ENCODE measurements at regions of chr2 and their contacts with region 1.

Region 1: GRCh38 chr2:201795607-201796477 is 10.5 kb upstream of the CDK15 start:
- DNase-seq: no peak
- ATAC-seq: peak; percentile 66

Region 2: GRCh38 chr2:201847481-201847880 is 51.6 kb after region 1 on chr2:
- intact Hi-C with region 1: no loop called
- DNase-seq: no peak
- ATAC-seq: no peak

Region 3: DNA sequence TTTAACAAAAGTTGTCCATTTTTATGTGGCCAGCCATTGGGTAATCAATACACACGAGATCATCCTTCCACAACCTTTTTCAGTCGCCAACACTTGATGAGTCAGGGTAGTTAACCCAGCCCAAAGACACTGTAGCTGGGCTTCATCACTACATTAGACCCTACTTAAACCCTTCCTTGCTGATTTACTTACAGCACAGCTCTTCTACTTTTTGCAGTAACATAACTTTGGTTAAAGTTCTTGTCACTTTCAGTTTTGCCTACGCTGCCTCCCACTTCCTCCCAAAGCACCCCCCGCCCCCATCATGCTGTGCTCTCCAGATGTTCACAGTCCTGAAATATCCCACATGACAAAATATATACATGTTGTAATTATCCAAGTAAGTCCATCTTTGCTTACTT is 114.1 kb after region 1 on chr2:
- intact Hi-C with region 1: no loop called
- DNase-seq: no peak
- ATAC-seq: peak; percentile 28

Region 4: DNA sequence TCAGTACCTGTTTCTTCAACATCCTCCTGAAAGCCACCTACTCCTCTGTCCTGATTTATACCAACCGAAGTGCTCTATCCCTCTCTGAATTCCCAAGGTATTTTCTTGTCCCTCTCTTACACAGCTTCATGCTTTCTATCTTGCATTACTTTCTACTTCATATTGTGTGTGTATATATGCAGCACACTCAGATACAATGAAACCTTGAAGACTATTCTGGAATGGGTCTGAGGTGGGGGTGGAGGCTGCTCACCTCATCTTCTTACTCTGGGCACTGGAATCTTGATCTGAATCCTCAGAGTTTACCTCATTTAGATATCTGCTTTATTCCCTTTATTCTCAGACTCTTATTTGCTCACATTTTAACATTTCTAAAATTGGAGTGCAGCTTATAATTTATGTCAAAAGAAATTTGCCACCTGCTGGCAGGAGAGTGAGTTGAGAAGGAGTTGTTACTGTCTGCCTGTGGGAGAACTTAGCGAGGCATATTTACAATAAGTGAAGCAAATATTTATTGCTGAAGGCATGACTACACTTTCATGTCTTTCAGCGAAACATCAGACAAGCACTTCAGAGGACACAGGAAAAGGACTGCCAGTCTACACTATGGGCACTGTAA is 260.7 kb after region 1 on chr2:
- intact Hi-C with region 1: loop called (anchors 10 kb)
- DNase-seq: no peak
- ATAC-seq: no peak

Region 5: DNA sequence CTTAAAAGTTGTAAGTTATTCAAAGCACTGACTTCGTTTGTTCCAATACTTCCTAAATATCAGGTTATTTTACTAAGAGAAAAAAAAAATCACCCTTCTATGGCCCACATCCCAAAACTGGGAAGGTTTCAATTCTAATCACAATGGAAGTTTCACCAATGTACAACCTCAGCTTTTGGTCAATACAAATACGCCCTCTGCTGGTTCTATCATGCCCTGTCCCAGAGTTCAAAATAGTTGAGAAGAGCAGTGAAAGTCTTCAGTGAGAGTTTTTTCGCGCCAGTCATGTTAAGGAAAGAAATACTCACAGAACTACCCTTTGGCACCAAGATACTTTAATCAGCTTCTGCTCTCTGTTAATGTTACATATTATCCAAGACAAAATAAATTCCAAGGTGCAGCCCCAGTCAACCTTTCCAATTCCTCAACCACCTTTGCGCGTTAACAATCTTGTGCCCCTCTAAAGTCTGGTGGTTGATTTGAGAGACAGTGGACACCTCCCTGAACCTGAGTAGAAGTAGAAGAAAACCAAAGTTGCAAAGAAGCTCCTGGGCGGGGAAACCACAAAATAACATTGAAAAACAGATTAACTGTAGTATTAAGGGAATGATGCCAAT is 382.6 kb after region 1 on chr2:
- intact Hi-C with region 1: loop called (anchors 5 kb)
- DNase-seq: no peak
- ATAC-seq: peak; percentile 86